A549 (cell line): ENCODE measurements at regions of chr11 and their contacts with region 1.

Region 1: DNA sequence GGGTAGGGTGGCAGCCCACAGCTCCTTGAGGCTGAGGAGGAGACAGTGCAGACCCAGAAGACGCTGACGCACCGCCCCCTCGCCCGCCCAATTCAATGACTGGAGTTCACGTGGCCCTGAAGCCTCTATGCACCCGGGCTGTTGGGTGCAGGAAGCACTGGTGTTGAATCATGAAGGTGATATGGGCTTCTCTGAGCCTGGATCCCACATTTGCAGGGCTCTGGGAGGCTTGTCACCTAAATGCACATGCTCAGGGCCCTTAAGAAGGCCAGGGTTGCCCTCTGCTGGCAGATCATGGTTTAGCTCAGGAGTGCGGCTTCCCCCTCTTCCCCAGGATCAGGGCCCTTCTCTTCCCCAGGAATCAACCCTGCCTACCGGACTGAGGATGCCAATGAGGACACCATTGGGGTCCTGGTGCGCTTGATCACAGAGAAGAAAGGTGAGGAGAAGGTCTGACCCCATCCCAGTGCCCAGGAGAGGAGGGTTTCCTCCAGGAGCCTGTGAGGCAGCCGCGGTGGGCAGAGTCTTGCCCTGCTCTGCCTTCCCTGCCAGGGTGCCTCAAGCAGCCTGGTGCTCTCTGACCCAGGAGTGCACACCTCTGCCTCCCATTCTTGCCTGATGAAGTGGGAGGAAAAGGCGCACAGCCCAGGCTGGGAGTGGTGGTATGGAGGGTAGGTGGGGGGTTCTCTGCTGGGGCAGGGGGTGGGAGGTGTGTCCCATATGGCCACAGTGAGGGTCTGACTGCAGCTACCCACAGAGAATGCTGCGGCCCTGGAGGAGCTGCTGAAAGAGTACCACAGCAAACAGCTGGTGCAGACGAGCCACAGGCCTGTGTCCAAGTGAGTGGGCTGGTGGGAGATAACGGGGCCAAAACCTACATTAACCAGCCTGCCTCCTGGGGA is 17.5 kb downstream of the RELT start:
- DNase-seq: peak; percentile 83 to 90
- ATAC-seq: peak; percentile 69 to 86
- H3K4me3 ChIP-seq: no peak overlapping the region
- H3K27ac ChIP-seq: no peak overlapping the region
- H3K4me1 ChIP-seq: peaks cover 21% of the 10 kb centered on the region
- CTCF ChIP-seq: peak; percentile 84
- EP300 ChIP-seq: no peak
- POLR2A ChIP-seq: no peak
- RAD21 ChIP-seq: peak; percentile 89 to 94

Region 2: GRCh38 chr11:73295231-73295995 is 98.3 kb before region 1 on chr11:
- CTCF ChIA-PET with region 1: interaction called, 15 read pairs
- POLR2A ChIA-PET with region 1: interaction called, 3 read pairs
- DNase-seq: peak; percentile 70 to 73
- ATAC-seq: peak; percentile 65 to 84
- H3K4me3 ChIP-seq: no peak overlapping the region
- H3K27ac ChIP-seq: peak overlapping the region in 1 of 2 experiments; percentile 47; a peak in 1 of 6 replicates
- H3K4me1 ChIP-seq: peaks cover 8% of the 10 kb centered on the region
- CTCF ChIP-seq: peak; percentile 86
- EP300 ChIP-seq: no peak
- POLR2A ChIP-seq: no peak
- RAD21 ChIP-seq: peak in 1 of 2 experiments; percentile 60; a peak in 4 of 5 replicates

Region 3: GRCh38 chr11:73314117-73314961 is 79.4 kb before region 1 on chr11:
- CTCF ChIA-PET with region 1: interaction called, 42 read pairs
- POLR2A ChIA-PET with region 1: no interaction called
- DNase-seq: peak in 1 of 2 experiments; percentile 30
- ATAC-seq: peak in 1 of 2 experiments; percentile 29; a peak in 3 of 6 replicates
- H3K4me3 ChIP-seq: no peak overlapping the region
- H3K27ac ChIP-seq: peak overlapping the region in 1 of 2 experiments; percentile 21; a peak in 1 of 6 replicates
- H3K4me1 ChIP-seq: peaks cover 32% of the 10 kb centered on the region
- CTCF ChIP-seq: no peak
- EP300 ChIP-seq: no peak
- POLR2A ChIP-seq: no peak
- RAD21 ChIP-seq: no peak

Region 4: GRCh38 chr11:73335204-73335923 is 58.4 kb before region 1 on chr11:
- CTCF ChIA-PET with region 1: interaction called, 20 read pairs
- POLR2A ChIA-PET with region 1: no interaction called
- DNase-seq: peak; percentile 73 to 93
- ATAC-seq: peak; percentile 72 to 83
- H3K4me3 ChIP-seq: no peak overlapping the region
- H3K27ac ChIP-seq: peak overlapping the region; percentile 62 to 80
- H3K4me1 ChIP-seq: peaks cover 38% of the 10 kb centered on the region
- CTCF ChIP-seq: peak; percentile 97
- EP300 ChIP-seq: no peak
- POLR2A ChIP-seq: no peak
- RAD21 ChIP-seq: peak; percentile 93 to 95

Region 5: DNA sequence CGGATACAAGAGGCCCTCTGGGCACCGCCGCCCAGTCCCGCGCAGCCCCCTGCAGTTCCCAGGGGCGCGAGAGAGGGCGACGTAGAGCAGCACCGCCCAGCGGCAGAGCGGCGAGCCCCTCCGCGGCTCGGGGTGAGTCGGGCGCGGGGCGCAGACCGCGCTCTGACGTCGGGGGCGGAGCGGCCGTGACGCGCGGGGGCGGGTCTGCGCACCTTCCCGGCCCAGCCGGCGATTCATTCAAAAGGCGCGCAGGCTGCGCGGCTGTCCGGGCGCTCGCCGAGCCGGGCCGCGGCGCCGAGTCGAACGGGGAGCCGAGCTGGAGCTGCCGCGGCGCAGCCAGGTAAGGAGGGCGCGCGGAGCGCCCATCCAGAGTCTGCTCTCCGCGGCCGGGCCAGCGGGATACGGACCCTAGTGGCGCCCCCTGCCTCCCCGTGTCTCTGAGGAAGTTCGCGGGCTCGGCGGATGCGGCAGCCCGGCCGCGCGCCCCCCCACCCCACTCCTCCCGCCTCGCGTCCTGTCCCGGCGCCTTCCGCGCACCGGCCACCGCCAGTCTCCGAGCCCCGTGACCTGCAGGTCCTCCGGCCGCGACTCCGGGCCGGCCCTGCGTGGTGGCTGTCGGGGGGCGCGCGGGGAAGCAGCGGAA is 17.4 kb before region 1 on chr11 and contains the start of gene RELT:
- CTCF ChIA-PET with region 1: interaction called, 667 read pairs
- POLR2A ChIA-PET with region 1: no interaction called
- DNase-seq: peak; percentile 89 to 91
- ATAC-seq: peak; percentile 83 to 84
- H3K4me3 ChIP-seq: peak within 1 kb of the TSS; percentile 59
- H3K27ac ChIP-seq: peak within 1 kb of the TSS; percentile 75 to 93
- H3K4me1 ChIP-seq: peaks cover 23% of the 10 kb centered on the region
- CTCF ChIP-seq: peak; percentile 73
- EP300 ChIP-seq: no peak
- POLR2A ChIP-seq: peak; percentile 98
- RAD21 ChIP-seq: peak; percentile 38 to 44; a peak in 3 of 5 replicates
- polyA plus RNA-seq, gene RELT: 2.9 TPM in 2 replicates

Region 6: DNA sequence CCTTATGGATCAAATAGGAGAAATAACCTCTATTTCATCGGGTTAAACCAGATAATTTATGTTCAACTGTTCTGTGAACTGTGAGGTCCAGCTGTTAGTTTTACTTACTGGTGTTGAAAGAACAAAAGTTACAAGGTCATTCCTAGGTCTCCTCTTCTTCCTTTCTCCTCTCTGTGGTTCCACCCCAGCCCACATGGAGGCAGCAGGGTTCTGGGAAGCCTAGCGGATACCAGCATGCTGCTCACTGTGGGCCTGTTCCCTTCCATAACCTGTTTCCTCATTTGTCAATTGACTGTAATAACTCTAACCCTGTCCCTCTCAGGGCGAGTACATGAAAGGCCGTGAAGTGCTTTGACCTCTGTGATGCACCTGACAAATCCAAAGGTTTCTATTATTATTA is 10.3 kb after region 1 on chr11:
- CTCF ChIA-PET with region 1: interaction called, 23 read pairs
- POLR2A ChIA-PET with region 1: no interaction called
- DNase-seq: peak; percentile 59 to 63
- ATAC-seq: peak; percentile 74 to 88
- H3K4me3 ChIP-seq: no peak overlapping the region
- H3K27ac ChIP-seq: no peak overlapping the region
- H3K4me1 ChIP-seq: no peaks in the 10 kb centered on the region
- CTCF ChIP-seq: peak; percentile 45
- EP300 ChIP-seq: no peak
- POLR2A ChIP-seq: no peak
- RAD21 ChIP-seq: peak; percentile 48 to 73

Region 7: DNA sequence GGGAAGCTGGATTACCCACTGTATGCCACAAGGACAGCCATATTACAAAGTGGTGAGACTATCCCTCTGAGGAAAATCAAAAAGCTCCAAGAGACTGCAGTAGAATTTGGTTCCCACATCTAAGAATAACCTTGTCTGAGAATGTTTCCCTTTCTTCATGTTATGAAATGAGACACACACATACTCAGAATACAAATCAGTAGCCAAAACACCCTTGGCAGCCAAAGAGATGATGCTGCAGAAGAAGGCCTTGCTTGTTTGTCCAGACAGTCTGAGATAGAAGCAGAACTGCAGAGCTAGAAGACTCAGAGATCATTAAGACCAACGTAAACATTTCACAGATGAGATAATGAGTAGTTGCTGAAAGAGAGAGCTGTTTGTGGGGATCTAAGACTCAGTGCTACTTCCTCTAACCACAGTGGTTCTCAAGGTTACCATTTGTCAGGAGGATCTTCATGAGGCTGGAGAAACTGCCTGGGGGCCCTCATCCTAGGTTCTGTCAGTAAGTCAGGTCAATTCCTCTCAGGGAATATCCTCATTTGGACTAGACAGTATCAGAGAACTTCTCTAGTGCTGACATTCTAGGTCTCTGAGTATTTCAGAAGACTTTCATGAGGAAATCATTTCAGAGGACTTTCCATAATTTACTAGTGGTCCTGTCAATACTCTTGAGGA is 21.4 kb after region 1 on chr11:
- CTCF ChIA-PET with region 1: interaction called, 13 read pairs
- POLR2A ChIA-PET with region 1: no interaction called
- DNase-seq: no peak
- ATAC-seq: no peak
- H3K4me3 ChIP-seq: no peak overlapping the region
- H3K27ac ChIP-seq: no peak overlapping the region
- H3K4me1 ChIP-seq: no peaks in the 10 kb centered on the region
- CTCF ChIP-seq: no peak
- EP300 ChIP-seq: no peak
- POLR2A ChIP-seq: no peak
- RAD21 ChIP-seq: no peak

Region 8: DNA sequence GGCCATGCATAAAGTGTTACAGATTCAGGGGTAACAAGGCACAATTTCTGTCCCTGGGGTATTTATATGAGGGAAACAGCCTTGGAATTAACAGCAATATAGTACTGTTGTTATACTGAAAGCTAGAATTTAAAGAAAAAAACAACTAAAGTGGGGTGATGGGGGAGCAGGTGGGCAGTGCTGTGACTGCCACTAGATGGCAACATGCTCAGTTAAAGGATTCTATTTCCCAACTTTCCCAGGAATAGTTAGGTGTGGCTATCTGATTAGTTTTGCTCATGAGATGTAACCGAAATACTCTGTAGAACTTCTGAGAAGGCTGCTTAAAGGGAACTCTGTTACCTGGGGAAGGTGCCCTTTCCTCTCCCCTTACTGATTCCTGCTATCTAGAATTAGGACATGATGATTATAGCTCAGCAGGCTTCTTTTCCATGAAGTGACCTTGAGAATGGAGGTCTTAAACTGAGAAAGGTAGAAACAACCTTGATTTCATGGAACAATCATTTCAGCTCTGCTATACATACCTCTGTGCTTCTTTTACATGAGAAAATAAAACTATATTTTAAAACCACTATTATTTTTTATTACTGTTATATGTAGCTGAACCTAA is 85.1 kb after region 1 on chr11:
- CTCF ChIA-PET with region 1: no interaction called
- POLR2A ChIA-PET with region 1: no interaction called
- DNase-seq: peak; percentile 51 to 61
- ATAC-seq: peak; percentile 85 to 93
- H3K4me3 ChIP-seq: no peak overlapping the region
- H3K27ac ChIP-seq: no peak overlapping the region
- H3K4me1 ChIP-seq: no peaks in the 10 kb centered on the region; the same call in 2 of the 3 replicates
- CTCF ChIP-seq: peak; percentile 89
- EP300 ChIP-seq: no peak
- POLR2A ChIP-seq: no peak
- RAD21 ChIP-seq: peak; percentile 61 to 68

Region 9: DNA sequence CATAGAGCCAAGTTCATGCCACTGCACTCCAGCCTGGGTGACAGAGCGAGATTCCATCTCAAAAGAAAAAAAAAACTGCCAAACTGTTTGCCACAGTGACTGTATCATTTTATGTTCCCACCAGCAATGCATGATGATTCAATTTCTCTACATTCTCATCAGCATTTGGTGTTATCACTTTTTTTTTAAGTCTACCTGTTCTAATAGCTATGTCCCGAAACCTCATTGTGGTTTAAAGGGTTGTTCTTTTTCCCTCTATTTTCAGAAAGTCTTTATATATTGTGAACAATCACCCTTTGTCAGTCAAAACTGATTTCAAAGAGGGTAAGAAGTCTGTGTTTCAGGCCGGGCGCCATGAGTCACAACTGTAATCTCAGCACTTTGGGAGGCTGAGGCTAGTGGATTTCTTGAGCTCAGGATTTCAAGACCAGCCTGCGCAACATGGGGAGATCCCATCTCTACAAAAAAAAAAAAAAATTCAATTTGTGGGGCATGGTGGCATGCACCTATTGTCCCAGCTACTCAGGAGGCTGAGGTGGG is 218.9 kb after region 1 on chr11:
- CTCF ChIA-PET with region 1: no interaction called
- POLR2A ChIA-PET with region 1: no interaction called
- DNase-seq: no peak
- ATAC-seq: no peak
- H3K4me3 ChIP-seq: no peak overlapping the region
- H3K27ac ChIP-seq: no peak overlapping the region
- H3K4me1 ChIP-seq: no peaks in the 10 kb centered on the region
- CTCF ChIP-seq: no peak
- EP300 ChIP-seq: no peak
- POLR2A ChIP-seq: no peak
- RAD21 ChIP-seq: no peak